ENCODE measurements at regions of chr16 and their contacts with region 1.

Region 1: DNA sequence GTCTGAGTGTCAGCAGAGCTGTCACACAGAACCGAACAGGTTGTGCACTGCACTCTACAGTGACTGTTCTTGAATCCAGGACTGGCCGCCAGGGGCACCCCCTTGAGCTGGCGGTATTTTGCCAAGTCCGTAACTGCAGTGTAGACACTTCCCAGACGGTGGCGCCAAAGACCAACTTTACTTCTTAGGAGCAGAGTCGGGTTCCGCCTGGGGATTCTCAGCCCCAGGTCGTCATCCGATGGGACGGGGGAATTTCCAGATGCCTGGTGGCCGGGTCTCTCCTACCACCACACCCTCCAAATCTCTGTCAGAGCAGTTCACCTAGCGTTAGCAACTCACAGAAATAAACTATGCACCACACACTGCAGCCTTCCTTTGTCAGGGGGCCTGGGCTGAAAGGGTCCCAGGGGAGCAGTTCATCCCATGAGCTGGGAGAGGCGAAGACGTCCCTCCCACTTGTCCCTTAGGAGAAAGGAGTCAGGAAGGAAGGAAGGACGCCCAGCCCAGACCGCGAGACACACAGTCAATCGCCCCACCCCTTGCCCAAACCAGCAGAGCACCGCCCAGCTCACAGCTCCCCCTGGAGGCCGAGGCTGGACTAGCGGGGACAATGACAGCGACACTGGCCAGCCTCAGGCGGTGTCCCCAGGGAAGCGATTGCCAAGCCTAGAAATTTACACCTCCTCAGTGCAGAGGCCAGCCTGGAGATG is 7.4 kb upstream of the RIPOR1 start:
- DNase-seq: peak; percentile 91
- CTCF ChIP-seq: peak; percentile 99

Region 2: GRCh38 chr16:67480833-67481560 is 40.3 kb before region 1 on chr16 and contains the start of gene ATP6V0D1:
- CTCF ChIA-PET with region 1: interaction called, 53 read pairs
- POLR2A ChIA-PET with region 1: no interaction called
- DNase-seq: peak; percentile 99
- CTCF ChIP-seq: peak; percentile 90

Region 3: DNA sequence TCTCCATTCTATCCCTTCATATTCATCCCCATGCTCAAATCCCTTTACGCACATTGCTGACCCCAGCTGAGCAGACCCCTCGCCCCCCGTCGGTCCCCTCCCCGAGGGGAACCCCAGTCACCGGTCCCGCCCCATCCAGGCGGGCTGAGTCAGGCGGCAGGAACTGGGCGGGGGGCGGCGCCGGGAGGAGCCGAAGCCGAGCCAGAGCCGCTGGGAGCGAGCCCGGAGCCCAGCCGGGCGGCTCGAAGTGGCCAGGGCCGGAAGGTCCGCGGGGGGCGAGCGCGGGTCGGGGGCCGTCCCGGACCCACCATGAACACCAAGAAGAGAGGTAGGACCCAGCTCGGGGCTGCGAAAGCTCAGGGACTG is 16.0 kb after region 1 on chr16:
- CTCF ChIA-PET with region 1: interaction called, 138 read pairs
- POLR2A ChIA-PET with region 1: interaction called, 4 read pairs
- DNase-seq: peak; percentile 72
- CTCF ChIP-seq: no peak

Region 4: GRCh38 chr16:67561824-67562525 is 40.7 kb after region 1 on chr16:
- CTCF ChIA-PET with region 1: interaction called, 74 read pairs
- POLR2A ChIA-PET with region 1: interaction called, 5 read pairs
- DNase-seq: peak; percentile 96
- CTCF ChIP-seq: no peak

Region 5: GRCh38 chr16:67653128-67653786 is 132.0 kb after region 1 on chr16:
- CTCF ChIA-PET with region 1: interaction called, 357 read pairs
- POLR2A ChIA-PET with region 1: no interaction called
- DNase-seq: no peak
- CTCF ChIP-seq: no peak

Region 6: DNA sequence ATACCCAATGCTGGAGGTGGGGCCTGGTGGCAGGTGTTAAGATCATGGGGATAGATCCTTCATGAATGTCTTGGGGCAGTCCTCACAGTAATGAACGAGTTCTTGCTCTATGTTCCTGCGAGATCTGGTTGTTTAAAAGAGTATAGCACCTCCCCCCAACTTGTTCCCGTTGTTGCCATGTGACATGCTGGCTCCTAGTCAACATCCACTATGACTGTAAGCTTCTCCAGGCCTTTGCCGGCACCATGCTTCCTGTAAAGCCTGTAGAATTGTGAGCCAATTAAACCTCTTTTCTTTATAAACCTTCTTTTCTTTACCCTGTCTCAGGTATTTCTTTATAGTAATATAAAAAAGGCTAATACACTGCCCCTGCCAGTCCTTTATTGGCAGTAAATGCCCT is 251.8 kb after region 1 on chr16:
- CTCF ChIA-PET with region 1: no interaction called
- POLR2A ChIA-PET with region 1: no interaction called
- DNase-seq: no peak
- CTCF ChIP-seq: no peak

Region 7: GRCh38 chr16:67902831-67903230 is 381.6 kb after region 1 on chr16:
- CTCF ChIA-PET with region 1: no interaction called
- POLR2A ChIA-PET with region 1: no interaction called
- DNase-seq: no peak
- CTCF ChIP-seq: no peak

Measured in GM10248 (cell line).